ENCODE measurements at regions of chr1 and their contacts with region 1.

Region 1: DNA sequence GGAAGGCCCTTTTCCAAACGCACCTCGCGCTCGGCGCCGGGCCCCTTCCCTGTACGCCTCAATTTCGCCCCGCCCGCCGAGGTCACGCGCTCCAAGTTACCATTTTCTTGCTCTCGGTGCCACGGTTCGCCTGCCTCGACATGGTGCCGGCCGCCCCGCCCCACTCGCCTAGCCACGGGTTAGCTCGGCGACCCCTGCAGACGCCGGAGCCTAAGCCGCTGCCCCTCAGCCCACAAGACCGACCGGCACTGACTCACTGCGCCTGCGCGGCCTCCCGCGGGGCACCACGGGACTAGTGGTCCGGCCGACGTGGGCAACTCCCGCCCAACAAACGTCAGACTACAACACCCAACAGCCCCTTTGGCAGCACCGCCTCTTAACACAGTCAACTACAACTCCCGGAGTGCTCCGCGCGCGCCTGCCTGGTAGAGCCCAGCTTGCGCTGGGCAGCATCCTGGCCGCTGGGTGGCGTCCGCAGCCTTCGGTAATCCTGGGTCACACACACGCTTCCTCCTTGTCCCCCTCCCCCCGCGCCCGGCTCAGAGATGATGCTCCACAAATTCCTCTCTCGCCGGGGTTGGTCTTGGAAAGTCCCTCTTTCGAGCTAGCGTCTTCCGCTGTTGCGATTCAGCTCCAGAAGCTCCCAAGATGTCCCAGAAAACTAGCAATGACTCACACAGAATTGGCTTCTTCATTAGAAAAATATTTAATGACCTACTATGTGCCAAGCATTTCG is at the start of gene TRAPPC3:
- DNase-seq: peak; percentile 100
- ATAC-seq: peak; percentile 92
- H3K4me3 ChIP-seq: peak within 1 kb of the TSS; percentile 40 to 47
- H3K27ac ChIP-seq: peak within 1 kb of the TSS; percentile 90 to 96 (median 94)
- H3K4me1 ChIP-seq: peaks cover 40% of the 10 kb centered on the region
- H3K27me3 ChIP-seq: no peaks in the 10 kb centered on the region
- CTCF ChIP-seq: peak; percentile 90 to 100 (median 99)
- POLR2A ChIP-seq: peak; percentile 49 to 89 (median 77)
- total RNA-seq, gene TRAPPC3: 45.7 to 71.5 TPM

Region 2: DNA sequence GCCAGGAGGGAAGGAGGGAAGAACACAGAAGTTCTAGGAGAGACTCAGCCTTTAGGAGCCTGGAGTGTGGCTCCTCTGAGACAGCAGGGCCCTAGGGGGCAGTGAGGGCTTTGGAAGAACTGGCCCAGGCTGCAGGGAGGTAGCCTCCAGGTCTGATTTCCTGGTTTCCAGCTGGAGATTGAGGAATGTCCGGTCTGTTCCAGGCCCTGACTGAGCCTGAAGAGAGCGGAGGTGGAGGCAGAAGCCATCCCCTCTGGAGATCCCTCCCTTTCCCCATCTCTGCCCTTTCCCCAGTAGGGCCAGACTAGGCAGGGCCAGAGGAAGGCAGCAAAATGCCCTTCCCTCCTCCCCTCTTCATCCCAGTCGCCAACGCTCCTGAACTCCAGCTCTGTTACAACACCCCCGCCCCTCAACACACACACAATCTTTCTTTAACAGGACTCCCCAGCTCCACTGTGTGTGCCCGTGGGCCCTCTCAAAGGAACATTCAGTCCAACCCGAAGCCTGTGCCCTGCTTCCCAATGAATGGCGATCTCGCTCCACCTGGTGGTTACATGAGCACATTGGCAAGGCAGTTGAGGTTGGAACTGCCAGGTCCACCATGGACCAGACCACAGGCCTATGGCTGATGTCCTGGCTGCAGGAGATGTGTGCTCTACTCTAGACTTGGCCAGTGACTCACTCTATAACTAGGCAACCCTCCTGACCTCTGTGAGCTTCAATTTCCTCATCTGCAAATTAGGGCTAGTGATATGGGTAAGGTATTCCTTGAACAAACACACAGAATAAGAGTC is 38.6 kb after region 1 on chr1:
- intact Hi-C with region 1: loop called (anchors 5 kb)
- DNase-seq: peak; percentile 87 to 91 (median 89)
- ATAC-seq: peak; percentile 98
- H3K4me3 ChIP-seq: no peak overlapping the region
- H3K27ac ChIP-seq: peak overlapping the region; percentile 33 to 65 (median 58)
- H3K4me1 ChIP-seq: peaks cover 9% of the 10 kb centered on the region
- H3K27me3 ChIP-seq: no peaks in the 10 kb centered on the region
- CTCF ChIP-seq: peak; percentile 73 to 97 (median 96)
- POLR2A ChIP-seq: peak in 1 of 3 donors; percentile 17

Measured in body of pancreas (tissue), 4 donors.